Posterior vena cava (tissue), 2 donors: ENCODE measurements at regions of chr9 and their contacts with region 1.

Region 1: DNA sequence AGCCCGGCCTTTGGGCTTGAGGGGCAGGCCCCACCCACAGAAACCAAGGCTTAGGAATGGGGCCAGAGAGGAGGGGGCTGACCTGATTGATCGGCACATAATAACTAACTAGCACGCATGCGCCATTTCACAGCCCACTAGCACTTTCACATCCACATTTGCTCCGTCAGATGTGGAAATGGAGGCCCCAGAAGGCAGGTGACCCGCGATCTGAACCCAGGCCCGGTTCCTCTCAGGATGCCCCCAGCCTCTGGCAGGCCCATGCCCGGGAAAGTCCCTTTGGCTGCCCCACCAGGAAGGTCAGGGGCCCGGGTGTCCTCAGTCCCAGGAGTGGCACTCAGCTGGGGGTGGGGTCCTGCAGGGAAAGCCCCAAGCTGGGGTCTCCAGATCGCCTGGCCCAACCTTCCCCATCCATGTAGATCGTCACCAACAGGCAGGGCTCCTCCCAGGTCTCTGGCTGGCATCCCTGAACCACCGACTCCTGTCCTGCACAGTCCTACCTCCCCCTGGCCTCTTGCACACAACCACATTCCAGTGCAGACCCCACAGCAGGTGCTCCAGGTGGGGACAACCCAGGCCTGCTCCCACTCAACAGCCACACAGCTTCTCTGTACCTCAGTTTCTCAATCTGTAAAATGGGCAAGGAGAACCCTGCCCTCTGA is 46.7 kb downstream of the VAV2 start:
- DNase-seq: peak; percentile 76

Region 2: GRCh38 chr9:133869674-133870405 is 75.6 kb before region 1 on chr9:
- intact Hi-C with region 1: loop called in 1 of 2 experiments (anchors 10 kb)
- DNase-seq: no peak

Region 3: GRCh38 chr9:133981958-133982681 is 36.7 kb after region 1 on chr9:
- intact Hi-C with region 1: loop called in 1 of 2 experiments (anchors 2 kb)
- DNase-seq: peak; percentile 79

Region 4: DNA sequence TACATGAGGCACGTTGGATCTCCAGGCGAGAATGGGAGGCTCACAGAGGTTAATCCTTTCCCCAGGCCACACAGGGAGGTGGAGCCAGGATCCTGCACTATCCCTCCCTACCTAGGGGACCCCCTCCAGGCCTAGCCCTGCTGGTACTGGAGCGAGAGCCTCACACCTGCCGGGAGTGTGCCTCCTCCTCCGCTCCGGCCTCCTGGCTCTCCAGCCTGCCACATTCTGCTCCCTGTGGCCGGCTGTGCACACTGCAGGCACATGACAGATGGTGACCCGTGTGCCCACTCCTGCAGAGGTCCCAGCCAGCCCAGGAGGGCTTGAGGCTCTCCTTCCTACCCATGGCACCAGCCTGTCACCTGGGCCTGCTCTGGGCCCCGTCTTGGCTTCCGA is 474.2 kb after region 1 on chr9:
- intact Hi-C with region 1: no loop called
- DNase-seq: no peak

Region 5: GRCh38 chr9:134770972-134771971 is 825.8 kb after region 1 on chr9:
- intact Hi-C with region 1: loop called in 1 of 2 experiments (anchors 5 kb)
- DNase-seq: no peak